Activated B cell treated with CpG ODN at 0.5 μM for 24 hours (primary cell): ENCODE measurements at regions of chr6 and their contacts with region 1.

Region 1: GRCh38 chr6:142946181-142946923 is 1.4 kb upstream of the HIVEP2 start:
- DNase-seq: peak; percentile 75
- ATAC-seq: peak; percentile 38
- H3K4me3 Mint-ChIP-seq: peak overlapping the region; percentile 93
- H3K27ac Mint-ChIP-seq: peak overlapping the region; percentile 96
- H3K4me1 Mint-ChIP-seq: peaks cover 41% of the 10 kb centered on the region
- H3K27me3 Mint-ChIP-seq: no peaks in the 10 kb centered on the region
- CTCF ChIP-seq: no peak

Region 2: GRCh38 chr6:142146828-142147662 is 799.3 kb before region 1 on chr6 and contains the starts of genes NMBR and VTA1:
- CTCF ChIA-PET with region 1: no interaction called
- POLR2A ChIA-PET with region 1: no interaction called
- intact Hi-C with region 1: loop called (anchors 2 kb)
- DNase-seq: peak; percentile 90
- ATAC-seq: peak; percentile 96
- H3K4me3 Mint-ChIP-seq: peak within 1 kb of the TSS; percentile 96
- H3K27ac Mint-ChIP-seq: peak within 1 kb of the TSS; percentile 78
- H3K4me1 Mint-ChIP-seq: peaks cover 54% of the 10 kb centered on the region
- H3K27me3 Mint-ChIP-seq: no peaks in the 10 kb centered on the region
- CTCF ChIP-seq: peak; percentile 16
- total RNA-seq, gene NMBR: not detected in 2 replicates
- total RNA-seq, gene VTA1: 30.3 and 30.4 TPM in 2 replicates

Region 3: DNA sequence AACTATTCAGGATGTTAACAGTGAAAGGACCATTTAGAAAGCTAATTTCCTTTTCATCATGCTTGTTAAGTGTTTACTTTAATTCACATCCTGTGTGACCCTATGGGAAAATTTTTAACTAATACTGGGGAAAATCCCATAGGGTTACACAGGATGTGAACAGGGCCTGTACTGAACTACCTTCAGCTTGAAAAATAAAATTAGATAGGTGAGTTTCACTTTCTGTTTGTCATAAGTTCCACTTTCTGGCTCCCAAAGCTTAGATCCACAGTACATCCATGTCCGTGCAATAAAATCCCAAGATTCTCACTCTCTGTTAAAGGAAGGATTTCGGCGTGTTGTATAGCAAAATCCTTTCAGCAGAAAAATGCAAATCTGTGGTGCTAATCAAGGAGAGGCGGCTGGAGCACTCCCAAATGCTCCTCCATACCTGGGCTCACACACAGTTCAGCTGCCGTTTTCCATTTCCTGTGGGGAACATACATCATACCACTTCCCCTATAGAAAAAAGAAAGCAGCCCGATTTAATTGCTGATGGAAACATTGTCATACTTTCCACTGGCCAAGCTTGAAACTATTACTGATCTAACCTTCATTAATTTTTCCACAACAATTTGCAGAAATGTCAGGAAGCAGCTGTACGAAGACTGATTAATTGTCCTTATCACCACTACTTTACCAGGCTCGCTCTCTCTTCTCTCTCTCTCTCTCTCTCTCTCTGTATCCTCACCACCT is 126.6 kb before region 1 on chr6:
- CTCF ChIA-PET with region 1: no interaction called
- POLR2A ChIA-PET with region 1: interaction called, 23 read pairs
- intact Hi-C with region 1: loop called (anchors 1 kb)
- DNase-seq: no peak
- ATAC-seq: peak; percentile 61
- H3K4me3 Mint-ChIP-seq: peak overlapping the region; percentile 74
- H3K27ac Mint-ChIP-seq: peak overlapping the region; percentile 93
- H3K4me1 Mint-ChIP-seq: peaks cover 79% of the 10 kb centered on the region
- H3K27me3 Mint-ChIP-seq: no peaks in the 10 kb centered on the region
- CTCF ChIP-seq: no peak

Region 4: DNA sequence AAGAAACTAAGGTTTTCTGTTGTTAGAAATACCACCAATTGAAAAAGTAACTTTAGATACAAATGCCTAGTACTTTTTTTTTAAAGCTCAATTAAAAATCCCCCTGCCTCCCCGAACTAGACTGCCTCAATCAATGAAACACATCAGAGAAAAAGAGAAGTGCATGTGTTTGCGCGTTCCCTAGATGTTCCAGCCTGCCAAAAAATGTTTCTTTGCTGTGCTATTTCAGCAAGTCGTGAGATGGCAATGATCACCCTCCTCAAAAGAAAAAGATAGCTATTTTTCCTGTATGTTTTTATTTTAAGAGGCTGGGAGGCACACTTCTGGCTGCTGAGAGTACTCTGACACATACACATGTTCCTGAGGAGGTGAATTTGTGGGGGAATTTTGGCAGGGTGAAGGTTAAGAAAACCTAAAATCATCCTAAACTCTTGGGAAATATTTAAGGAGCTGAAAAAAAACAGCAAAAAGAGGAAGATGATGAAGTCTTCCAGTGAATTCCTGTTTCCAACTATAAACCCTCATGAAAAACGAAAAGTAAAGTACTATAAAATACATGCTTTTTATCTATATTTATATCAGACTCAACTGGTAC is 116.1 kb before region 1 on chr6:
- CTCF ChIA-PET with region 1: no interaction called
- POLR2A ChIA-PET with region 1: no interaction called
- intact Hi-C with region 1: no loop called
- DNase-seq: no peak
- ATAC-seq: no peak
- H3K4me3 Mint-ChIP-seq: no peak overlapping the region
- H3K27ac Mint-ChIP-seq: peak overlapping the region; percentile 10
- H3K4me1 Mint-ChIP-seq: peaks cover 39% of the 10 kb centered on the region
- H3K27me3 Mint-ChIP-seq: no peaks in the 10 kb centered on the region
- CTCF ChIP-seq: no peak

Region 5: GRCh38 chr6:142913511-142914047 is 32.8 kb before region 1 on chr6:
- CTCF ChIA-PET with region 1: no interaction called
- POLR2A ChIA-PET with region 1: interaction called, 25 read pairs
- intact Hi-C with region 1: loop called (anchors 1 kb)
- DNase-seq: peak; percentile 52
- ATAC-seq: peak; percentile 93
- H3K4me3 Mint-ChIP-seq: peak overlapping the region; percentile 78
- H3K27ac Mint-ChIP-seq: peak overlapping the region; percentile 98
- H3K4me1 Mint-ChIP-seq: peaks cover 52% of the 10 kb centered on the region
- H3K27me3 Mint-ChIP-seq: no peaks in the 10 kb centered on the region
- CTCF ChIP-seq: no peak

Region 6: DNA sequence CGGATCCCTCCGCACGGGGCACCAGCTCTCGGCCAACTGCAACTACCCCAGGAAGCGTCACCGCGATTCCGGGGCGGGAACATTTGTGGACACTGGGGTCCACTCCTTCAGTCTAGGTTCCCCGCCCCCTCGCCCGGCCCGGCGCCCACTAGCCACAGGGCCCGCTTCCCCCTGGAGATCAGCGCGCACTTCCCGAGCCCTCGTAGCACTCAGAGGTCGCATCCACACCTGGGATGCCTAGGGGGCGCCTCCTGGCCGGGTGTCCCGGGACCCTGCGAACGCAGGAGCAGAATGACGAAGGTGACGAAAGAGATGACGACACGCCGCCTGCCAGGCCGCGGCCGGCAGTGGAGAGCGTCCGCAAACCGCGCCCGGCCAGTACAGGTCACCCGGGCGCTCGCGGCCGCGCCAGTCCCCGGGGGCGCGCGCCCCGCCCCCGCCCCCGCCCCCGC is 114.0 kb after region 1 on chr6:
- CTCF ChIA-PET with region 1: no interaction called
- POLR2A ChIA-PET with region 1: interaction called, 9 read pairs
- intact Hi-C with region 1: loop called (anchors 1 kb)
- DNase-seq: peak; percentile 74
- ATAC-seq: peak; percentile 63
- H3K4me3 Mint-ChIP-seq: peak overlapping the region; percentile 93
- H3K27ac Mint-ChIP-seq: peak overlapping the region; percentile 86
- H3K4me1 Mint-ChIP-seq: peaks cover 20% of the 10 kb centered on the region
- H3K27me3 Mint-ChIP-seq: no peaks in the 10 kb centered on the region
- CTCF ChIP-seq: no peak

Region 7: GRCh38 chr6:144063744-144064401 is 1117.5 kb after region 1 on chr6:
- CTCF ChIA-PET with region 1: no interaction called
- POLR2A ChIA-PET with region 1: interaction called, 4 read pairs
- intact Hi-C with region 1: loop called (anchors 5 kb)
- DNase-seq: peak; percentile 91
- ATAC-seq: peak; percentile 93
- H3K4me3 Mint-ChIP-seq: peak overlapping the region; percentile 94
- H3K27ac Mint-ChIP-seq: peak overlapping the region; percentile 89
- H3K4me1 Mint-ChIP-seq: peaks cover 36% of the 10 kb centered on the region
- H3K27me3 Mint-ChIP-seq: no peaks in the 10 kb centered on the region
- CTCF ChIP-seq: no peak